Right cardiac atrium (tissue), 5 donors: ENCODE measurements at regions of chr11 and their contacts with region 1.

Region 1: GRCh38 chr11:2211113-2211971 is 39.7 kb upstream of the TH start:
- DNase-seq: peak in 1 of 3 donors; percentile 48
- ATAC-seq: no peak
- H3K4me3 ChIP-seq: no peak overlapping the region
- H3K27ac ChIP-seq: no peak overlapping the region
- H3K4me1 ChIP-seq: no peaks in the 10 kb centered on the region
- H3K27me3 ChIP-seq: no peaks in the 10 kb centered on the region

Region 2: GRCh38 chr11:2269601-2270321 is 58.4 kb after region 1 on chr11:
- intact Hi-C with region 1: loop called in 1 of 4 experiments (anchors 10 kb)
- DNase-seq: peak; percentile 44 to 80 (median 72)
- ATAC-seq: peak; percentile 35 to 36
- H3K4me3 ChIP-seq: peak overlapping the region; percentile 49
- H3K27ac ChIP-seq: no peak overlapping the region
- H3K4me1 ChIP-seq: no peaks in the 10 kb centered on the region
- H3K27me3 ChIP-seq: no peaks in the 10 kb centered on the region